ENCODE measurements at regions of chr6 and their contacts with region 1.

Region 1: DNA sequence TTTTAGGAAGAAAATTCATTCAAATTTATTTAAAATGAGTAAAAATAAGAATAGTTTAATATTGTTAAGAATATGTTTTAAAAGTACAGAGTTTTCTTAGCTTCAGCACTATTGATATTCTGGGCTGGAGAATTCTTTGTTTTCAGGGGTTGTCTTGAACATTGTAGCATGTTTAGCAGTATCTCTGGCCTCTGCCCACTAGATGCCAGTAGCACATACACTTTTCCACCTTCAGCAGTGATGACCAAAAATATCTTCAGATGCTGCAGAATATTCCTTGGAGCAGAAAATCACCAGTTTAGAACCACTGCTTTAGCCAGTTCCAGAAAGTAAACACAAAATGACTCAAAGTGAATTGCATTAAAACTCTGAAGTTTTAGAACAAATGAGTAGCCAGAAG is 19.4 kb upstream of the SDHAF4 start:
- DNase-seq: peak in 1 of 2 donors; percentile 19
- ATAC-seq: peak; percentile 83 to 87
- H3K4me3 ChIP-seq: no peak overlapping the region
- H3K27ac ChIP-seq: peak overlapping the region in 1 of 4 donors; percentile 41
- H3K4me1 ChIP-seq: peaks cover 0 to 18% of the 10 kb centered on the region in 2 donors
- H3K27me3 ChIP-seq: no peaks in the 10 kb centered on the region
- CTCF ChIP-seq: peak in 4 of 5 experiments; percentile 44 to 61 (median 54)
- POLR2A ChIP-seq: no peak

Region 2: GRCh38 chr6:70673601-70674000 is 126.3 kb after region 1 on chr6:
- in situ Hi-C with region 1: loop called in 1 of 4 experiments (anchors 10 kb)
- intact Hi-C with region 1: loop called (anchors 5 kb)
- DNase-seq: no peak
- ATAC-seq: peak in 1 of 2 donors; percentile 68
- H3K4me3 ChIP-seq: no peak overlapping the region
- H3K27ac ChIP-seq: peak overlapping the region; percentile 42 to 54 (median 50)
- H3K4me1 ChIP-seq: peaks cover 52 to 54% of the 10 kb centered on the region in 2 donors
- H3K27me3 ChIP-seq: no peaks in the 10 kb centered on the region
- CTCF ChIP-seq: no peak
- POLR2A ChIP-seq: no peak

Region 3: GRCh38 chr6:70686548-70687133 is 139.3 kb after region 1 on chr6:
- in situ Hi-C with region 1: loop called in 3 of 4 experiments (anchors 5 to 10 kb)
- intact Hi-C with region 1: loop called (anchors 1 kb)
- DNase-seq: no peak
- ATAC-seq: no peak
- H3K4me3 ChIP-seq: no peak overlapping the region
- H3K27ac ChIP-seq: peak overlapping the region; percentile 78 to 85 (median 80)
- H3K4me1 ChIP-seq: peaks cover 37 to 49% of the 10 kb centered on the region in 2 donors
- H3K27me3 ChIP-seq: no peaks in the 10 kb centered on the region
- CTCF ChIP-seq: peak; percentile 68 to 88 (median 79)
- POLR2A ChIP-seq: no peak

Region 4: GRCh38 chr6:70884074-70884983 is 337.0 kb after region 1 on chr6:
- in situ Hi-C with region 1: loop called in 3 of 4 experiments (anchors 10 to 25 kb)
- intact Hi-C with region 1: loop called (anchors 1 kb)
- DNase-seq: peak; percentile 30 to 39
- ATAC-seq: peak; percentile 57 to 88
- H3K4me3 ChIP-seq: no peak overlapping the region
- H3K27ac ChIP-seq: no peak overlapping the region
- H3K4me1 ChIP-seq: no peaks in the 10 kb centered on the region
- H3K27me3 ChIP-seq: no peaks in the 10 kb centered on the region
- CTCF ChIP-seq: peak; percentile 81 to 95 (median 87)
- POLR2A ChIP-seq: no peak

Measured in gastrocnemius medialis (tissue), 4 donors.